GM12878 (cell line): ENCODE measurements at regions of chr5 and their contacts with region 1.

Region 1: DNA sequence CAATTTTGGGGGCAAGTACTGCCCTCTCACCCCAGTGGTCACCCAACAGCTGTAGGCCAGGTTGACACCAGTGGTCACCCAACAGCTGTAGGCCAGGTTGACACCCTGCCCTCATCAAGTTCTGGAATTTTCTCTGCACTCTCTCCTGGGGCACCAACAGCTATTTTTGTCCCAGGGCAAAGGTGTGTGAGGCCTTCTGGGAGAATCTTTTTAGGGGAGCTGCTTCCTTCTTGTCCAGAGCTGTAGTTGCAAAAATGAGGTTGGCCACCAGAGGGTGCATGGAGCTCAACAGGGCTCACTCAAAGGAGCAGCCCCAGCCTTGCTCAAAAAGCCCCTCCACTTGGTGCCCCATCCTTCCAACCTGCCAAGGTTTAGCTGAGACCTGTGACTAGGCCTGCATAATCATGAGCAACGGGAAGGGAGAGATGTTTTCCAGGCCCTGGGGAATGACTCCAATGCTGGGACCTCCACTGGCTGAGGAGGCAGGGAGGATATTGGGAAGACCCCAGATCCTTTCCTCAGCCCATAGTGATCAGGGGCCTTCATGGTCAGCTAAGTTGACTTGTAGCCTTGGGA is 10.6 kb upstream of the P4HA2 start:
- DNase-seq: peak; percentile 32
- ATAC-seq: peak; percentile 98
- H3K4me3 ChIP-seq: no peak overlapping the region
- H3K27ac ChIP-seq: no peak overlapping the region
- H3K4me1 ChIP-seq: no peaks in the 10 kb centered on the region
- H3K27me3 ChIP-seq: no peaks in the 10 kb centered on the region
- CTCF ChIP-seq: peak; percentile 83 to 87 (median 87)
- EP300 ChIP-seq: no peak
- POLR2A ChIP-seq: no peak
- RAD21 ChIP-seq: peak; percentile 83

Region 2: GRCh38 chr5:132086277-132086794 is 151.9 kb before region 1 on chr5:
- CTCF ChIA-PET with region 1: no interaction called
- POLR2A ChIA-PET with region 1: no interaction called
- RAD21 ChIA-PET with region 1: no interaction called
- SMC1A ChIA-PET with region 1: no interaction called
- in situ Hi-C with region 1: no loop called
- intact Hi-C with region 1: no loop called
- DNase-seq: no peak
- ATAC-seq: no peak
- H3K4me3 ChIP-seq: no peak overlapping the region
- H3K27ac ChIP-seq: no peak overlapping the region
- H3K4me1 ChIP-seq: no peaks in the 10 kb centered on the region
- H3K27me3 ChIP-seq: no peaks in the 10 kb centered on the region; a peak in 1 of 4 replicates
- CTCF ChIP-seq: no peak
- EP300 ChIP-seq: no peak
- POLR2A ChIP-seq: no peak
- RAD21 ChIP-seq: no peak

Region 3: GRCh38 chr5:132180134-132180745 is 58.0 kb before region 1 on chr5:
- CTCF ChIA-PET with region 1: interaction called, 52 read pairs
- POLR2A ChIA-PET with region 1: interaction called, 3 read pairs
- RAD21 ChIA-PET with region 1: interaction called, 15 read pairs
- SMC1A ChIA-PET with region 1: interaction called, 16 read pairs
- in situ Hi-C with region 1: no loop called
- intact Hi-C with region 1: no loop called
- DNase-seq: no peak
- ATAC-seq: peak; percentile 63
- H3K4me3 ChIP-seq: no peak overlapping the region
- H3K27ac ChIP-seq: no peak overlapping the region
- H3K4me1 ChIP-seq: peaks cover 11% of the 10 kb centered on the region
- H3K27me3 ChIP-seq: no peaks in the 10 kb centered on the region
- CTCF ChIP-seq: peak; percentile 66 to 69 (median 69)
- EP300 ChIP-seq: no peak
- POLR2A ChIP-seq: no peak
- RAD21 ChIP-seq: peak; percentile 84

Region 4: GRCh38 chr5:132227485-132228240 is 10.6 kb before region 1 on chr5 and contains the start of gene P4HA2:
- CTCF ChIA-PET with region 1: interaction called, 41 read pairs
- POLR2A ChIA-PET with region 1: interaction called, 7 read pairs
- RAD21 ChIA-PET with region 1: interaction called, 18 read pairs
- SMC1A ChIA-PET with region 1: interaction called, 10 read pairs
- in situ Hi-C with region 1: no loop called
- intact Hi-C with region 1: no loop called
- DNase-seq: no peak
- ATAC-seq: peak; percentile 96
- H3K4me3 ChIP-seq: peak within 1 kb of the TSS; percentile 75
- H3K27ac ChIP-seq: no peak within 1 kb of the TSS
- H3K4me1 ChIP-seq: peaks cover 10% of the 10 kb centered on the region
- H3K27me3 ChIP-seq: peaks cover 0 to 5% of the 10 kb centered on the region in 2 experiments; a peak in 2 of 4 replicates
- CTCF ChIP-seq: peak in 1 of 3 experiments; percentile 18; a peak in 1 of 6 replicates
- EP300 ChIP-seq: no peak
- POLR2A ChIP-seq: peak; percentile 68
- RAD21 ChIP-seq: no peak
- polyA plus RNA-seq, gene P4HA2: 9.1 to 10.6 TPM

Region 5: DNA sequence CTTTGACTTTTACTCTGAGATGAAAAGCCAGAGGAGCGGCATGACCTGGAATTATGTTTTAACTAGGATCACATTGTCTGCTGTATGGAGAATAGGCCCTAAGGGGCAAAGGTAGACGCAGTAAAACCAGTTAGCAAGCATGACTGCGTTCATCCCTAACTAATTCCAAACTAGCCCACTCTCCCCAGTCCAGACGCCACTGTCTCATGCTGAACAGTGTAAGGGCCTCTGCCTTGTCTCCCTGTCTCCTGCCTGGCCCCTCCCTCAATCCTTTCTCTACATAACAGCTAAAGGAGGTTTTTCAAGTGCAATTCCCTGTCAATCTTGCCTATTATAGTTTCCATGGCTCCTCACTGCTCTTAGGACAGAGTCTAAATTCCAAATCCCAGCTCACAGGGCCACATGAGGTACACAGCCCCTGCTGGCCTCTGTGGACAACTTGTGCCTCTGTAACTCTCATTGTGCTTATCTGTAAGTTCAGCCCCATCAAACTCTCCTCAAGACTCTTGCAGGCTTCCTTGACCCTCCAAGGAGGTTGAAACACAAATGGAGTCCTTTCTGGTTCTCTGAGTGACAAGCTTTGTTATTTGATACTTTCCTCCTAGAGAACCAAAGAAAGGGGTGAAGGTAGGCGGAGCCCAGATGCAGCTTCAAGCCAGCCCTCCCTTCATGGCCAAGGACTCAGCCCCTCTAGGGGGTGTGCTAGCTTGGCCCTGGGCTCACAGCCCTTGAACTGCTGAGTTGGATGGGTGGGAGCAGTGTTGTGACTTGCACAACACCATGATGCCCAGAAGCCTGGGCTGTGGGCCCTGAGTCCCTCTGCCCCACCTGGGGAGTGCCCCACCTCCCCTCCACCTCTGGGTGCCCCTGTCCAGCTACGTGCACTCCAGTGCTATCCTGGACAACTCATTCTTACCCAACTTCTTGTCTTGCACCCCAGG is 40.0 kb after region 1 on chr5:
- CTCF ChIA-PET with region 1: interaction called, 23 read pairs
- POLR2A ChIA-PET with region 1: no interaction called
- RAD21 ChIA-PET with region 1: interaction called, 6 read pairs
- SMC1A ChIA-PET with region 1: interaction called, 14 read pairs
- in situ Hi-C with region 1: no loop called
- intact Hi-C with region 1: no loop called
- DNase-seq: no peak
- ATAC-seq: no peak
- H3K4me3 ChIP-seq: no peak overlapping the region
- H3K27ac ChIP-seq: no peak overlapping the region
- H3K4me1 ChIP-seq: no peaks in the 10 kb centered on the region
- H3K27me3 ChIP-seq: no peaks in the 10 kb centered on the region; a peak in 1 of 4 replicates
- CTCF ChIP-seq: no peak
- EP300 ChIP-seq: no peak
- POLR2A ChIP-seq: no peak
- RAD21 ChIP-seq: no peak

Region 6: GRCh38 chr5:132327252-132327955 is 89.1 kb after region 1 on chr5:
- CTCF ChIA-PET with region 1: interaction called, 24 read pairs
- POLR2A ChIA-PET with region 1: no interaction called
- RAD21 ChIA-PET with region 1: no interaction called
- SMC1A ChIA-PET with region 1: interaction called, 16 read pairs
- in situ Hi-C with region 1: no loop called
- intact Hi-C with region 1: no loop called
- DNase-seq: no peak
- ATAC-seq: no peak
- H3K4me3 ChIP-seq: no peak overlapping the region
- H3K27ac ChIP-seq: no peak overlapping the region
- H3K4me1 ChIP-seq: no peaks in the 10 kb centered on the region
- H3K27me3 ChIP-seq: no peaks in the 10 kb centered on the region; a peak in 1 of 4 replicates
- CTCF ChIP-seq: no peak
- EP300 ChIP-seq: no peak
- POLR2A ChIP-seq: no peak
- RAD21 ChIP-seq: no peak

Region 7: DNA sequence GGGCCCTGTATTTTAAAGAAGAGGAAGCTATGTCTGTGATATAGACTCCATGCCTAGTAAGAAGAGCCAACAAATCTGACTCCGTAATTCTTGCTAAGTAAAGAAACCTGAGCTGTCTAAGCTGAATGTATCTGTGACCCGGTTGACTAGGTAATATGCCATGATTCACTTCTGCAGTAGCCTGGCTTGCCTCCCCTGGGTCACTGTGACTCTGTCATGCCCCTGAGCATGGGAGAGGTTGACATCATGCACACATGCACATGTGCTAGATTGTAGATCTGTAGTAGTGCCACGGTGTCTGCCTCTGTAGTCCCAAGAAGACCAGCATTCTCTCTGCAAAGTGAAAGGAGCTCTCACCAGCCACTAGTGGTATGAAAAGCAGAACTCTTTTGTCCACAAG is 140.3 kb after region 1 on chr5:
- CTCF ChIA-PET with region 1: interaction called, 16 read pairs
- POLR2A ChIA-PET with region 1: no interaction called
- RAD21 ChIA-PET with region 1: interaction called, 7 read pairs
- SMC1A ChIA-PET with region 1: interaction called, 11 read pairs
- in situ Hi-C with region 1: no loop called
- intact Hi-C with region 1: no loop called
- DNase-seq: no peak
- ATAC-seq: peak; percentile 71
- H3K4me3 ChIP-seq: no peak overlapping the region
- H3K27ac ChIP-seq: no peak overlapping the region
- H3K4me1 ChIP-seq: no peaks in the 10 kb centered on the region
- H3K27me3 ChIP-seq: no peaks in the 10 kb centered on the region
- CTCF ChIP-seq: no peak
- EP300 ChIP-seq: no peak
- POLR2A ChIP-seq: no peak
- RAD21 ChIP-seq: no peak